ENCODE measurements at regions of chr16 and their contacts with region 1.

Region 1: GRCh38 chr16:48385272-48386150 is at the start of gene SIAH1:
- DNase-seq: peak; percentile 75 to 92
- H3K4me3 ChIP-seq: peak within 1 kb of the TSS; percentile 68
- H3K4me3 Mint-ChIP-seq: peak within 1 kb of the TSS; percentile 94
- H3K27ac Mint-ChIP-seq: peak within 1 kb of the TSS; percentile 96
- H3K4me1 ChIP-seq: peaks cover 10% of the 10 kb centered on the region; the same call in 1 of the 2 replicates
- H3K4me1 Mint-ChIP-seq: peaks cover 15% of the 10 kb centered on the region
- H3K27me3 ChIP-seq: no peaks in the 10 kb centered on the region
- H3K27me3 Mint-ChIP-seq: no peaks in the 10 kb centered on the region
- CTCF ChIP-seq: no peak
- total RNA-seq, gene SIAH1: 26.6 and 27.2 TPM in 2 replicates

Region 2: GRCh38 chr16:48353565-48354163 is 31.8 kb before region 1 on chr16:
- CTCF ChIA-PET with region 1: no interaction called
- POLR2A ChIA-PET with region 1: no interaction called
- intact Hi-C with region 1: loop called (anchors 1 kb)
- DNase-seq: peak; percentile 63 to 75
- H3K4me3 ChIP-seq: no peak overlapping the region
- H3K4me3 Mint-ChIP-seq: no peak overlapping the region
- H3K27ac Mint-ChIP-seq: no peak overlapping the region
- H3K4me1 ChIP-seq: no peaks in the 10 kb centered on the region
- H3K4me1 Mint-ChIP-seq: no peaks in the 10 kb centered on the region
- H3K27me3 ChIP-seq: no peaks in the 10 kb centered on the region
- H3K27me3 Mint-ChIP-seq: no peaks in the 10 kb centered on the region
- CTCF ChIP-seq: peak; percentile 83 to 95

Region 3: GRCh38 chr16:48365581-48366164 is 19.8 kb before region 1 on chr16:
- CTCF ChIA-PET with region 1: interaction called, 3 read pairs
- POLR2A ChIA-PET with region 1: interaction called, 11 read pairs
- intact Hi-C with region 1: loop called (anchors 1 kb)
- DNase-seq: peak; percentile 87 to 92
- H3K4me3 ChIP-seq: peak overlapping the region; percentile 54
- H3K4me3 Mint-ChIP-seq: peak overlapping the region; percentile 86
- H3K27ac Mint-ChIP-seq: peak overlapping the region; percentile 94
- H3K4me1 ChIP-seq: peaks cover 20% of the 10 kb centered on the region
- H3K4me1 Mint-ChIP-seq: no peaks in the 10 kb centered on the region
- H3K27me3 ChIP-seq: no peaks in the 10 kb centered on the region
- H3K27me3 Mint-ChIP-seq: no peaks in the 10 kb centered on the region
- CTCF ChIP-seq: no peak